Calu3 (cell line): ENCODE measurements at regions of chr1 and their contacts with region 1.

Region 1: DNA sequence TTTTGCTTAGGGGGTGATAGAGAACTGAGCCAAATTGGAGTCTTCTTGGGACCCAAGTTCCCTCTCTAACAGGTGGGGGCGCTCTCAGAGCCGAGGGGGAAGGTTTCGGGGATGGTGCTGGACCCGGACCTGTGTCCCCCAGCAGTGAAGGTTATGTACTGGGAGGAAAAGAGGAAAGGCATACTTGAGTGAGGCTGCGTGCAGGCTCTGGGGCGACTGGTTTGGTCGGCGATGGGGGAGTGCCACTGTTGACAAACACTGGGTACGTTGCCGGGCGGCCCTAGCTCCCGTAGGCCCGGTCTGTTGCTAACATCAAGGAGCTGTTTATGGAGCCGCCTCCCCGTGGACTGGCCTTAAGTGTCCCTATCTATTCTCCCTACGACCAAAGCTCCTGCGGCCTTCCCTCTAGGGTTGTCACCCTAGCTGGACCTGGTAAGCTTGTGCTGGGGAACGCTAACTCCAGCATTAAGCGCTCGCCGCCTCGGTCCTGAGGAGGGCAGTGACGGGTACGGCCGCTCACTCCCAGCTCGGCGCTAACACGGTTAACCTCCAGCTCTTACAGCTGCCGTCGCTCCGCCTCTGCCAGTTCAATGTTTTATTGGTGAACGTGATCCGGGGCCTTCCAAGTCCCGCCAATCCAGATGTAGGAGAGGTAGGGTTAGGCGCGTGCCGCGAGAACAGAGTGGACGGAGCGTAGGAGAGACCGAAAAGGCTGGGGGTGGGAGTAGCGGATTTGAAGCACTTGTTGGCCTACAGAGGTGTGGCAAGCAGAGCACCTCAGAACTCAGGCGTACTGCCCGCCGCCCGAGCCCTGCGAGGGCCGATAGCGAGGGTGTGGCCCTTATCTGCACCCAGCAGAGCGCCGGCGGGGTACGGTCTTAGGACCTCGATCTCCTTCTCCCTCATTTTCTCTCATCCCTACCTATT is at the start of gene PPOX:
- DNase-seq: peak; percentile 96
- H3K4me3 Mint-ChIP-seq: peak within 1 kb of the TSS; percentile 93
- H3K27ac Mint-ChIP-seq: peak within 1 kb of the TSS; percentile 94
- H3K4me1 Mint-ChIP-seq: peaks cover 7% of the 10 kb centered on the region
- H3K27me3 Mint-ChIP-seq: no peaks in the 10 kb centered on the region
- CTCF ChIP-seq: peak; percentile 58
- total RNA-seq, gene PPOX: 25.7 and 27.1 TPM in 2 replicates

Region 2: GRCh38 chr1:159699246-159699645 is 1466.8 kb before region 1 on chr1:
- CTCF ChIA-PET with region 1: interaction called, 12 read pairs
- intact Hi-C with region 1: no loop called
- DNase-seq: no peak
- H3K4me3 Mint-ChIP-seq: no peak overlapping the region
- H3K27ac Mint-ChIP-seq: no peak overlapping the region
- H3K4me1 Mint-ChIP-seq: no peaks in the 10 kb centered on the region
- H3K27me3 Mint-ChIP-seq: no peaks in the 10 kb centered on the region
- CTCF ChIP-seq: no peak

Region 3: GRCh38 chr1:161274874-161275273 is 108.9 kb after region 1 on chr1:
- CTCF ChIA-PET with region 1: no interaction called
- intact Hi-C with region 1: no loop called
- DNase-seq: no peak
- H3K4me3 Mint-ChIP-seq: no peak overlapping the region
- H3K27ac Mint-ChIP-seq: no peak overlapping the region
- H3K4me1 Mint-ChIP-seq: no peaks in the 10 kb centered on the region
- H3K27me3 Mint-ChIP-seq: peaks cover 64% of the 10 kb centered on the region
- CTCF ChIP-seq: no peak

Region 4: GRCh38 chr1:161389691-161390558 is 223.9 kb after region 1 on chr1:
- CTCF ChIA-PET with region 1: interaction called, 10 read pairs
- intact Hi-C with region 1: no loop called
- DNase-seq: peak; percentile 98
- H3K4me3 Mint-ChIP-seq: peak overlapping the region; percentile 81
- H3K27ac Mint-ChIP-seq: peak overlapping the region; percentile 94
- H3K4me1 Mint-ChIP-seq: peaks cover 10% of the 10 kb centered on the region
- H3K27me3 Mint-ChIP-seq: no peaks in the 10 kb centered on the region
- CTCF ChIP-seq: no peak